Aorta (tissue), 5 donors: ENCODE measurements at regions of chr18 and their contacts with region 1.

Region 1: GRCh38 chr18:48940854-48941611 is 9.7 kb downstream of the SMAD7 start:
- DNase-seq: no peak
- ATAC-seq: no peak
- H3K4me3 ChIP-seq: no peak overlapping the region
- H3K27ac ChIP-seq: peak overlapping the region; percentile 61 to 83
- H3K4me1 ChIP-seq: peaks cover 2 to 6% of the 10 kb centered on the region in 2 donors
- H3K27me3 ChIP-seq: no peaks in the 10 kb centered on the region

Region 2: GRCh38 chr18:49178736-49179135 is 237.7 kb after region 1 on chr18:
- intact Hi-C with region 1: loop called in 1 of 2 experiments (anchors 5 kb)
- DNase-seq: no peak
- ATAC-seq: no peak
- H3K4me3 ChIP-seq: no peak overlapping the region
- H3K27ac ChIP-seq: no peak overlapping the region
- H3K4me1 ChIP-seq: no peaks in the 10 kb centered on the region
- H3K27me3 ChIP-seq: no peaks in the 10 kb centered on the region